Activated CD8-positive, alpha-beta T cell treated with anti-CD3 and anti-CD28 coated beads, Interleukin-2, amount 10 ng/mL, durations not matched to agents 7 days and 5 days (primary cell): ENCODE measurements at regions of chr10 and their contacts with region 1.

Region 1: DNA sequence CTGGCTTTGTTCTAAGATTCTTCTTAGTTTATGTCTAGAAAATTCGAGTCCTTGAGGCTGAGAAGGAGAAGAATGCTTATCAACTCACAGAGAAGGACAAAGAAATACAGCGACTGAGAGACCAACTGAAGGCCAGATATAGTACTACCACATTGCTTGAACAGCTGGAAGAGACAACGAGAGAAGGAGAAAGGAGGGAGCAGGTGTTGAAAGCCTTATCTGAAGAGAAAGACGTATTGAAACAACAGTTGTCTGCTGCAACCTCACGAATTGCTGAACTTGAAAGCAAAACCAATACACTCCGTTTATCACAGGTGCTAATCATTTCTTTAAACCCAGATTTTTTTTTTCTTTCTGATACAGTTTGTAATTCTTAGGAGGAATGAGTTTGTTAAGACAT is 6.7 kb downstream of the CEP55 start:
- DNase-seq: no peak
- ATAC-seq: no peak
- H3K4me3 Mint-ChIP-seq: no peak overlapping the region
- H3K27ac Mint-ChIP-seq: no peak overlapping the region
- H3K4me1 Mint-ChIP-seq: peaks cover 37% of the 10 kb centered on the region
- H3K27me3 Mint-ChIP-seq: no peaks in the 10 kb centered on the region

Region 2: GRCh38 chr10:93190372-93190771 is 312.7 kb before region 1 on chr10:
- CTCF ChIA-PET with region 1: no interaction called
- POLR2A ChIA-PET with region 1: no interaction called
- DNase-seq: no peak
- ATAC-seq: no peak
- H3K4me3 Mint-ChIP-seq: no peak overlapping the region
- H3K27ac Mint-ChIP-seq: no peak overlapping the region
- H3K4me1 Mint-ChIP-seq: no peaks in the 10 kb centered on the region
- H3K27me3 Mint-ChIP-seq: peaks cover 10% of the 10 kb centered on the region

Region 3: DNA sequence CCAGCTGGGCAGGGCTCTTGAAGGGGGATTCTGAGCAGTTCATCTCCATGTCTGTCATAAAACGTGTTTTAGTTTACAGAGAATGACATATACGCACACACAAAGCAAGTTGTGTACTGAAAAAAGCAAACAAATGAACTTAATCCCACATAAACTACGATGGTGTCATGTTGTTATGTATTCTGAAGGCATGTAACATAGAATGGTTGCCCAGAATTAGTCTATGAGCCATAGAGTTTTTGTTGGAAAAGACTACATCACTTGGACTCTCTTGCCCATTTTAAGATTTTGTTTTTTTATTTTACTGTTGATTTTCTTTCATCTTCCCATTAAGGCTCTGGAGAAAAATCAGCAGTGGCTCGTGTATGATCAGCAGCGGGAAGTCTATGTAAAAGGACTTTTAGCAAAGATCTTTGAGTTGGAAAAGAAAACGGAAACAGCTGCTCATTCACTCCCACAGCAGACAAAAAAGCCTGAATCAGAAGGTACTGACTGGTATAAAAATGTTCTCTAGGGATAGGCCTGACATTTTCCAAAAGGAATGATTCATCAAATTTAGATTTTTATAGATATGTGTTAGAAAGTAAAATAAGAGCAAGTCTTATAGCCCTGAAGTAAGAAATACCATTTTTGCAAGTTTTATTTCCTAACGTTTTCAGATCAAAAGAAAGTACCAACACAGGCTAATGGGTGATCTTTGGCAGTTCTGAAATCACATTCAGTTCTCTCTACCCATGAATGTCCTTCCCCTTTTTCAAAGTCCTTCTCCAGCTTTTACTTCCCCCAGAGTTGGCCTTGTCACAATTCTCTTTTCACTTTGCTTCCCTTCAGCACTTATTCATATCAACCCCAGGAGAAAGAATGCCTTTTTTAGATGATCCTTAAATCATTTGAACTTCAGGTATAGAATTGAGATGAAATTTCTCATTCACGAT is 12.3 kb after region 1 on chr10:
- CTCF ChIA-PET with region 1: interaction called, 11 read pairs
- POLR2A ChIA-PET with region 1: interaction called, 3 read pairs
- DNase-seq: no peak
- ATAC-seq: no peak
- H3K4me3 Mint-ChIP-seq: no peak overlapping the region
- H3K27ac Mint-ChIP-seq: no peak overlapping the region
- H3K4me1 Mint-ChIP-seq: no peaks in the 10 kb centered on the region
- H3K27me3 Mint-ChIP-seq: no peaks in the 10 kb centered on the region